ENCODE measurements at regions of chr5 and their contacts with region 1.

Region 1: GRCh38 chr5:126776497-126777256 is at the start of gene LMNB1:
- DNase-seq: peak; percentile 96
- H3K4me3 Mint-ChIP-seq: peak within 1 kb of the TSS; percentile 94
- H3K27ac Mint-ChIP-seq: peak within 1 kb of the TSS; percentile 97
- H3K4me1 Mint-ChIP-seq: peaks cover 16% of the 10 kb centered on the region
- H3K27me3 Mint-ChIP-seq: no peaks in the 10 kb centered on the region
- total RNA-seq, gene LMNB1: 232 and 239 TPM in 2 replicates

Region 2: DNA sequence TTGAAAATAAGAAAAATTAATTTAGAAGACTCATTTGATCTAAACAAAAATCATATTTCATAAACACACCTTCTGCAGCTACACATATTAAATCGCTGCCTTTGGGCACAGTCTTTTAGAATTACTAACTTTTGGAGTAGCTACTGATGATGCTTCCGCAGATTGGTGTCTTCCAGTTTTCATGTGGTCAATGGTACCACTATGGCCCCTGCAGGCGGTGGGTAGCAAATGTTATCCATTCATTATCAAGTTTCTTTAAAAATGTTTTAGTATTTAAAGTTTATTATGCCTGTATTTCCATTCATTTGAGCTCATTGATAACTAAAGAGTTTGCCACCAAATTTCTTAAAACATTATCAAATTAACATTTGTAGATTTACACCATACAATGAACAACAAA is 476.4 kb before region 1 on chr5:
- intact Hi-C with region 1: no loop called
- DNase-seq: no peak
- H3K4me3 Mint-ChIP-seq: no peak overlapping the region
- H3K27ac Mint-ChIP-seq: no peak overlapping the region
- H3K4me1 Mint-ChIP-seq: no peaks in the 10 kb centered on the region
- H3K27me3 Mint-ChIP-seq: no peaks in the 10 kb centered on the region

Region 3: DNA sequence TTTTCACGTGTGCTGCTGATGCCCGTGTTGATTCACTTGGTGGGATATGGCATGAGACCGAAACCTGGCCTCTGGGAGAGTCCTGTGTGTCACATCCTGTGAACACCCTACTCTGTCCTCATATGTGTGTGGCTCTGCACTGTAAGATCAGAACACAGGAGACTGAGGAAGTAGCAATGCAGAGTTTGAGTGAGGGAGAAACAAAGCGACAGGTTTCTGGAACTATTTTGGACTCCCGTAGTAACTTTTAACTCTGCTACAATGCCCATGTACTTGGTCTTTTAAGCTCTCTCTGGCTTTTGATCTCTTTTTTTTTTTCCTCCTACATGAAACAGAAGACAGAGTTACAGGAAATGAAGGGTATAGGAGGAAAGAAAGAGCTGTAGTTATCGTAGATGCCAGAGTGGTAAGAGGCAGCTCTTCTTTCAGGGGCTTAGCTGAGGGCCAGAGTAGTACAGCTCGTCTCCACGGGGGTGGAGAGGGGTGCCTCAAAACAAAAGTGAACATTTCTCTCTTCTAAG is 326.9 kb before region 1 on chr5:
- intact Hi-C with region 1: loop called (anchors 10 kb)
- DNase-seq: peak; percentile 55
- H3K4me3 Mint-ChIP-seq: peak overlapping the region; percentile 82
- H3K27ac Mint-ChIP-seq: peak overlapping the region; percentile 99
- H3K4me1 Mint-ChIP-seq: peaks cover 67% of the 10 kb centered on the region
- H3K27me3 Mint-ChIP-seq: no peaks in the 10 kb centered on the region

Region 4: DNA sequence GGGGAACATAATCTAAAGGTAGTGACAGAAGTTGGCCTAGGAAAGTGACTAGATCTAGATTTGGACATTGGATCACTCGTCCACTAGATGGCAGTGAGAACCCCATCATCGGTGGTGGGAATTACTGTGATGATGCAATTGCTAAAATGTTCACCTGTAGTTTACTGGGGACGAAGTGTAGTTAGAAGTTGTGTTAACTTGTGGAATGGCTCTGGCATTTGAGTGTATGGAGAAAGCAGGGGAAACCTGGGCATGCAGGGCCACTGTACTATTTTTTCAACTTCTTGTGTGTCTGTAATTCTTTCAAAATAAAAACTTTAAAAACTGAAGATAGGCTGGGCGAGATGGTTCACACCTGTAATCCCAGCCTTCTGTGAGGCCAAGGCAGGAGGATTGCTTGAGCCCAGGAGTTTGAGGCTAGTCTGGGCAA is 100.5 kb before region 1 on chr5:
- intact Hi-C with region 1: loop called (anchors 1 kb)
- DNase-seq: peak; percentile 57
- H3K4me3 Mint-ChIP-seq: no peak overlapping the region
- H3K27ac Mint-ChIP-seq: peak overlapping the region; percentile 8
- H3K4me1 Mint-ChIP-seq: peaks cover 19% of the 10 kb centered on the region
- H3K27me3 Mint-ChIP-seq: no peaks in the 10 kb centered on the region

Region 5: DNA sequence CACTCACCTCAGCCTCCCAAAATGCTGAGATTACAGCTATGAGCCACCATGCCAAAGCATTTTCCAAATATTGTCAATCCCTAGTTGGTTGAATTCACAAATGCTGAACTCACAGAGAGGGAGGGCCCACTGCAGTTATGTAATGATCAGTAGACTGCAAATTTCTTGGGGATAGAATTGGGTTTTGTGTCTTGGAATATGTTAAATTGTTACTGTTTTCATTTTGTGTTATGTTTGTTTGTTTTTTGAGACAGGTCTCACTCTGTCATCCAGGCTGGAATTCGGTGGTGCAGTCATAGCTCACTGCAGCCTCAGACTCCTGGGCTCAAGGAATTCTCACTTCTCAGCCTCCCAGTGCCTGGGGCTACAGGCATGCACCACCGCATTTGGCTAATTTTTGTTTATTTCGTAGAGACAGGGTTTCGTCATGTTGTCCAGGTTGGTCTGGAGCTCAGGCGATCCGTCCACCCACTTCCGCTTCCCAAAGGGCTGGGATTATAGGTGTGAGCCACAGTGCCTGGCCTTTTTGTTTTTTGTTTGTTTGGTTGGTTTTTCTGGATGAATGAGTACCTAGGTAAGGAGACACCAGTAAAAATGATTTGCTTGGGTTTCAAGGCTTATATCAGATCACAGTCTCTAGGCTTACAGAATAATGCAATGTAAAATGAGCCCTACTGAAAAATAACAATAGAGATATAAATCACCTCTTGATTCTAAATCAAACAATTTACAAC is 31.3 kb before region 1 on chr5:
- intact Hi-C with region 1: loop called (anchors 1 kb)
- DNase-seq: no peak
- H3K4me3 Mint-ChIP-seq: no peak overlapping the region
- H3K27ac Mint-ChIP-seq: peak overlapping the region; percentile 43
- H3K4me1 Mint-ChIP-seq: peaks cover 46% of the 10 kb centered on the region
- H3K27me3 Mint-ChIP-seq: peaks cover 2% of the 10 kb centered on the region

Region 6: DNA sequence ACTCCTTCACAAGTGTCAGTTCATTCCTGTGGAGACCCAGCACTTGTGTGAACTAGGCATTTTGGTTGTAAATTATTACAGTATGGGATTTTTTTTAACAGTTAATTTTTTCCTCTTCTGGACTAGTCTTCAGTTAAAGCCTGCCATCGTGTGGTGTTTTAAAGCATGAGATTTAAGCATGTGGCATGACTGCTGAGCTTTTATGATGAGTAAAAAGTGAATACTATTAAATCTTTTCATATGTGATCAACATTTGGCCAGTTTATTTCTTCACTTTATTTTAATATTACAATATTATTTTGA is 25.3 kb after region 1 on chr5:
- intact Hi-C with region 1: loop called (anchors 2 kb)
- DNase-seq: no peak
- H3K4me3 Mint-ChIP-seq: no peak overlapping the region
- H3K27ac Mint-ChIP-seq: no peak overlapping the region
- H3K4me1 Mint-ChIP-seq: peaks cover 39% of the 10 kb centered on the region
- H3K27me3 Mint-ChIP-seq: no peaks in the 10 kb centered on the region

Region 7: GRCh38 chr5:127030259-127031146 is 253.8 kb after region 1 on chr5 and contains the start of gene MARCHF3:
- intact Hi-C with region 1: no loop called
- DNase-seq: peak; percentile 94
- H3K4me3 Mint-ChIP-seq: peak within 1 kb of the TSS; percentile 86
- H3K27ac Mint-ChIP-seq: peak within 1 kb of the TSS; percentile 38
- H3K4me1 Mint-ChIP-seq: peaks cover 15% of the 10 kb centered on the region
- H3K27me3 Mint-ChIP-seq: peaks cover 42% of the 10 kb centered on the region
- total RNA-seq, gene MARCHF3: 1.9 and 2.1 TPM in 2 replicates

Region 8: DNA sequence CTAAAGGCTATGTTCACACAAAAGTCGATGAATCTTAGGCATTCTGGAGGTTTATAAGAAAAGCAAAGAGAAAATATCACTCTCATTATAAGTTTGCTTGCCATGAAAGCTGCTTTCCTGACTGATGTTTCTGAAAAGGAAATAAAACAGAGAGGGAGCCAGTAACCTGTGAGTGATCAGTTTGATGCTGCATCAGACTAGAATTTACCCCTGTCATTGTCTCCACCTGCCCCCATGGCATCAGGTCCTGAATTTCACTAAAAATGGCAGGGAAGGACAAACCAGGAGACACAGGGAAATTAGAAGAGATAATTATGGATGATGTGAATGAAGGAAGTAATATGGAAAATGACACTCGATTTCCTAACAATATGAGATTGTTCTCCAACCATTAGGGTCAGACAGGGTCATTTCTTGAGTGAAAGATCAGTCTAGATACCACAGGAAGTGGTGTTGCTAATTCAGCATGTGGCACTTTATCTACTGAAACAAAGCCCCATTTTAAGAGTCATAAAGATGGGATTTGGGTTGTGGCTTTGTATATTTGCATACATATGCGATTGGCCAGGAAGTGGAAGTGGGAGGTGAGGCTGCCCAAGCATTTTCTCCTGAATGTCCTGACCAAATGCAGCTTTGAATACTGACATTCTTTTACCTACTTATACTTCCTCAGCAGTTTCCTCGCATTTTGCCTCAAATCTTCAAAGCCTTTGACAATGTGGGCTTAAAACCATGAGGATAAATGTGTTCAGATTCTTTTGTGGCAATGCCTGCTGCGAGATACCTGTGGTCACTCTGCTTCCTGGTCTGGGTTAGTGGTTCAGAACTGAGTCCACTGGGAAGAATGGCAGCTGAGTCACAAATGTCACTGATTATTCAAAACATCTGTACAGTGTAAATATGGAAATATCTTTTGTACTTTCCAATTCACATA is 543.6 kb after region 1 on chr5:
- intact Hi-C with region 1: loop called (anchors 1 kb)
- DNase-seq: no peak
- H3K4me3 Mint-ChIP-seq: no peak overlapping the region
- H3K27ac Mint-ChIP-seq: no peak overlapping the region
- H3K4me1 Mint-ChIP-seq: peaks cover 14% of the 10 kb centered on the region
- H3K27me3 Mint-ChIP-seq: peaks cover 15% of the 10 kb centered on the region